Activated CD8-positive, alpha-beta T cell treated with anti-CD3 and anti-CD28 coated beads for 36 hours (primary cell): ENCODE measurements at regions of chr6 and their contacts with region 1.

Region 1: GRCh38 chr6:2853761-2854395 is 12.2 kb upstream of the SERPINB1 start:
- DNase-seq: peak; percentile 98
- ATAC-seq: peak; percentile 58
- H3K4me3 Mint-ChIP-seq: peak overlapping the region; percentile 59
- H3K27ac Mint-ChIP-seq: peak overlapping the region; percentile 100
- H3K4me1 Mint-ChIP-seq: peaks cover 67% of the 10 kb centered on the region
- H3K27me3 Mint-ChIP-seq: no peaks in the 10 kb centered on the region
- CTCF ChIP-seq: peak; percentile 60

Region 2: DNA sequence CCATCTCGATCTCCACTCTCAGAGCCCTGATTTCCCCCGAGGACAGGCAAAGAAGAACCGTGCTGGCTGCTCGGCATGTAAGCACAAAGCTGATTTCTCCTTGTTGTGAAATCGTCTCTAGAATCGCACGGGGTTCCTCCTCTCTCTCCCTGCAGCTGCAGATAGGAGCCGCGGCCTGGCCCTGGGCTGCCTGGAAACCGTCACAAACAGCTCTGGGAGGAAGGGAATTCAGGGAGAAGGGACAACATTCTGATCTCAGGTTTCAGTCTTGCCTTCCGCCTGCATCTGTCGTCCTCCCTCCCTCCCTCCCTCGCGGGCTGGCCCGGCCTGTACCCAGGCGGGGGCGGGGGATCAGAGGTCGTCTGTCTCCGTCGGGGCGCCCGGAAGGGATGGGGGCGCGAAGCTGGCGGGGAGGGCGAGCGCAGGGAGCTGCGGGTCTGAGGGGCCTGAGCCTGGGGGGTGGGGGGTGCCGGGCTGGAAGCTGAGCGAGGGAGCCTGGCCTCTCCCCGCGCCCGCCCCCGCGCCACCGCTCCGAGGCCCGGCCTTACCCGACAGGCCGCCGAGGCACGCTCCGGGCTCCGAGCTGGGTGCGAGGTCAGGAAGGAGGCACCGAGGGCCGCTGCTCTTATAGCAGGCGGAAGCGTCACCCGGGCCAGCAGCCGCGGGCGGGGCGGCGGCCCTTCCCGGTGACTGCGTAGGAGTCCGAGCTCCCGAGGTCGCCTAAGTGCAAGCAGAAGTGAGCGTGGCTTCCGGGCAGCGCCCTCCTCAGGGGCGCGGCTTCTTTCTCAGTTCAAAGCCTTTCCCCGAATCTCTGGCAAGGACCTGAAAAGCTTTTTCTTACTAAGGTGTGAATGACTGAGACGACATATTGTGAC is 12.4 kb before region 1 on chr6 and contains the start of gene SERPINB1:
- CTCF ChIA-PET with region 1: interaction called, 37 read pairs
- POLR2A ChIA-PET with region 1: interaction called, 29 read pairs
- intact Hi-C with region 1: no loop called
- DNase-seq: peak; percentile 95
- ATAC-seq: peak; percentile 90
- H3K4me3 Mint-ChIP-seq: peak within 1 kb of the TSS; percentile 85
- H3K27ac Mint-ChIP-seq: peak within 1 kb of the TSS; percentile 92
- H3K4me1 Mint-ChIP-seq: peaks cover 65% of the 10 kb centered on the region
- H3K27me3 Mint-ChIP-seq: no peaks in the 10 kb centered on the region
- CTCF ChIP-seq: no peak
- total RNA-seq, gene SERPINB1: 55.8 to 60.0 TPM

Region 3: DNA sequence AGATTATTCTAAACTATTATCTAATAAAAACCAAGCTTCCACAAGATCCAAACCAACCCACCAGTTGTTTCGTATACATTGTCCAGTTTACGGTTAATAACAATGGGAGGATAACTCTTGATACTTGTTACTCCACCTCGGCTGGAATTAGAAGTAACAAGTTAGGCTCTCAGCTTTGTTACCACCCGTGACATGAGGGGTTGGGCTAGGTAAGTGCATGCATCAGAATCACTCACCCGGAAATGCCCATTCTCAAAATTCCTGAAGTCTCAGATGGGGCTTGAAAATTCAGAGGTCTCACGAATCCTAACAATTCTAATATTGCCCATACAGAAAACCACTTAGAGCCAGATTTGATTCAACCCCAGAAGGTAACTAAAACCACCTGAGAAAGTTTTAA is 14.8 kb after region 1 on chr6:
- CTCF ChIA-PET with region 1: interaction called, 14 read pairs
- POLR2A ChIA-PET with region 1: interaction called, 22 read pairs
- intact Hi-C with region 1: no loop called
- DNase-seq: no peak
- ATAC-seq: no peak
- H3K4me3 Mint-ChIP-seq: peak overlapping the region; percentile 34
- H3K27ac Mint-ChIP-seq: peak overlapping the region; percentile 81
- H3K4me1 Mint-ChIP-seq: peaks cover 64% of the 10 kb centered on the region
- H3K27me3 Mint-ChIP-seq: no peaks in the 10 kb centered on the region
- CTCF ChIP-seq: no peak

Region 4: DNA sequence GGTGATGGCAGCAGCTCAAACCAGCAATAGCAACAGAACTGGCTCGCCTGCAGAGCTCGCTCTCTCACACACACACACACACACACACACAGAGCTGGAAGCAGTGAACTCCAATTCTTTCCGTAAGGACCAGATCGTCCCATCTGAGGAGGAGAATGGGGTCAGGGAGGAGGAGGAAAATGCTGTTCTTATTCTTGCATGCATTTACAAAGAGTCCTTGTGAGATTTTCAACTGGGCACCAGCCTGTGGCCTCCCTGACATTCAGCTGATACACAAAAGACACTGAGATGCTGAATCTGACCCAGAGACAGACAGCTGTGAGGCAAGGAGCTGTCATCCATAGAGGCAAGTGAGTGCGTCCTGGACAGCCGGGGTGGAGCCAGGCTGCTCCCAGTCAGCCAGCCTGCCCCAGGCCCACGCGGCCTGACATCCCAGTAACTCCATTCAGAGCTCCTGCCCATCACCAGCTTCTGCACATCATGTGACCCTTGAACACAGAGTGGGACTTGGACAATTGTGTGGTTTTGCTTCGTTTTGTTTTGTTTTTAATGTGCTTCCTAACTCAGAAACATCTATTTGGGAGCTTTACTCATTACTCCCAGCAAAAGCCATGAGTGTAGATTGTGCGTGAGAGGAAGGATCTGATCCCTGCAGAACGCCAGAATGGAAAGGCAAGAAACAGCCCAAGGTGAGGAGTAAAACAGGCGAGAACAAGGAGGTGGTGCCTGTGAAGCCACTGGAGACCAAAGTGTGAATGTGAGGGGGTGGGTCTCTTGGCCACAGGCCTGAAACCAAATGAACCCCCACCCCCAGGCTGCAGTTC is 47.2 kb after region 1 on chr6:
- CTCF ChIA-PET with region 1: interaction called, 5 read pairs
- POLR2A ChIA-PET with region 1: interaction called, 42 read pairs
- intact Hi-C with region 1: loop called (anchors 5 kb)
- DNase-seq: peak; percentile 22
- ATAC-seq: peak; percentile 7
- H3K4me3 Mint-ChIP-seq: peak overlapping the region; percentile 98
- H3K27ac Mint-ChIP-seq: peak overlapping the region; percentile 80
- H3K4me1 Mint-ChIP-seq: peaks cover 47% of the 10 kb centered on the region
- H3K27me3 Mint-ChIP-seq: no peaks in the 10 kb centered on the region
- CTCF ChIP-seq: no peak

Region 5: DNA sequence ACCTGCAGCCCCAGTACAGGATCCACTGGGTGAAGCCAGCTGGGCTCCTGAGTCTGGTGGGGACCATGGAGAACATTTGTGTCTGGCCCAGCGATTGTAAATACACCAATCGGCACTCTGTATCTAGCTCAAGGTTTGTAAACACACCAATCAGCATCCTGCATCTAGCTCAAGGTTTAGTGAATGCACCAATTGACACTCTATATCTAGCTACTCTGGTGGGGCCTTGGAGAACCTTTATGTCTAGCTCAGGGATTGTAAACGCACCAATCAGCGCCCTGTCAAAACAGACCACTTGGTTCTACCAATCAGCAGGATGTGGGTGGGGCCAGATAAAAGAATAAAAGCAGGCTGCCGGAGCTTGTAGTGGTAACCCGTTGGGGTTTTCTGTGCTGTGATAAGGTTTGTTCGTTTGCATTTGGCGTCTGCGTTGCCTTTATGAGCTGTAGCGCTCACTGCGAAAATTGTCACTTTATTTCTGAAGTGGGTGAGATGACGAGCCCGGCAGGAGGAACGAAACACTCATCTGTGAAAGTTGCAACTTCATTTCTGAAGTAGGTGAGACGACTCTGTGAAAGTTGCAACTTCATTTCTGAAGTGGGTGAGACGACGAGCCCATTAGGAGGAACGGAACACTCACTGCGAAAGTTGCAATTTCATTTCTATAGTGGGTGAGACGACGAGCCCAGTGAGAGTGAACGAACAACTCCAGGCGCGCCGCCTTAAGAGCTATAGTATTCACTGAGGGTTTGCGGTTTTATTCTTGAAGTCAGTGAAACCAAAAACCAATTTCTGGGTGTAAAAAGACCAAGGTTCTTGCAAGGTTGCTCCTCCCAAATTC is 86.4 kb after region 1 on chr6:
- CTCF ChIA-PET with region 1: interaction called, 180 read pairs
- POLR2A ChIA-PET with region 1: interaction called, 20 read pairs
- intact Hi-C with region 1: no loop called
- DNase-seq: peak; percentile 94
- ATAC-seq: peak; percentile 88
- H3K4me3 Mint-ChIP-seq: peak overlapping the region; percentile 54
- H3K27ac Mint-ChIP-seq: peak overlapping the region; percentile 96
- H3K4me1 Mint-ChIP-seq: peaks cover 66% of the 10 kb centered on the region
- H3K27me3 Mint-ChIP-seq: no peaks in the 10 kb centered on the region
- CTCF ChIP-seq: no peak